ENCODE measurements at regions of chr3 and their contacts with region 1.

Region 1: GRCh38 chr3:111936191-111936841 is 42.5 kb upstream of the ABHD10 start:
- DNase-seq: peak; percentile 84
- ATAC-seq: peak; percentile 90
- H3K4me3 ChIP-seq: no peak overlapping the region
- H3K27ac ChIP-seq: peak overlapping the region; percentile 99; the same call in 1 of the 2 replicates
- H3K4me1 ChIP-seq: peaks cover 12% of the 10 kb centered on the region
- H3K27me3 ChIP-seq: no peaks in the 10 kb centered on the region
- CTCF ChIP-seq: no peak
- POLR2A ChIP-seq: no peak
- RAD21 ChIP-seq: no peak

Region 2: GRCh38 chr3:111408011-111408410 is 528.3 kb before region 1 on chr3:
- CTCF ChIA-PET with region 1: no interaction called
- POLR2A ChIA-PET with region 1: no interaction called
- dilution Hi-C with region 1: no loop called
- in situ Hi-C with region 1: no loop called
- intact Hi-C with region 1: no loop called
- DNase-seq: no peak
- ATAC-seq: no peak
- H3K4me3 ChIP-seq: no peak overlapping the region
- H3K27ac ChIP-seq: no peak overlapping the region
- H3K4me1 ChIP-seq: no peaks in the 10 kb centered on the region
- H3K27me3 ChIP-seq: no peaks in the 10 kb centered on the region
- CTCF ChIP-seq: no peak
- POLR2A ChIP-seq: no peak
- RAD21 ChIP-seq: no peak

Region 3: GRCh38 chr3:111904376-111905241 is 31.7 kb before region 1 on chr3:
- CTCF ChIA-PET with region 1: interaction called, 3 read pairs
- POLR2A ChIA-PET with region 1: no interaction called
- dilution Hi-C with region 1: no loop called
- in situ Hi-C with region 1: no loop called
- intact Hi-C with region 1: loop called (anchors 5 kb)
- DNase-seq: peak; percentile 92
- ATAC-seq: peak; percentile 70
- H3K4me3 ChIP-seq: no peak overlapping the region
- H3K27ac ChIP-seq: no peak overlapping the region; the same call in 1 of the 2 replicates
- H3K4me1 ChIP-seq: peaks cover 12% of the 10 kb centered on the region
- H3K27me3 ChIP-seq: no peaks in the 10 kb centered on the region
- CTCF ChIP-seq: 0 out of 2 replicates have a peak, but pooled peaks have one; percentile 19
- POLR2A ChIP-seq: no peak
- RAD21 ChIP-seq: no peak

Region 4: GRCh38 chr3:113696658-113697499 is 1760.6 kb after region 1 on chr3:
- CTCF ChIA-PET with region 1: no interaction called
- POLR2A ChIA-PET with region 1: interaction called, 15 read pairs
- dilution Hi-C with region 1: no loop called
- in situ Hi-C with region 1: no loop called
- intact Hi-C with region 1: no loop called
- DNase-seq: peak; percentile 99
- ATAC-seq: peak; percentile 93
- H3K4me3 ChIP-seq: peak overlapping the region; percentile 95
- H3K27ac ChIP-seq: peak overlapping the region; percentile 90
- H3K4me1 ChIP-seq: peaks cover 4% of the 10 kb centered on the region
- H3K27me3 ChIP-seq: no peaks in the 10 kb centered on the region
- CTCF ChIP-seq: peak; percentile 35; the same call in 1 of the 2 replicates
- POLR2A ChIP-seq: no peak
- RAD21 ChIP-seq: no peak

Measured in IMR-90 (cell line).